PC-9 (cell line): ENCODE measurements at regions of chr17 and their contacts with region 1.

Region 1: GRCh38 chr17:67800495-67800928 is 24.8 kb upstream of the BPTF start:
- DNase-seq: peak; percentile 59 to 63
- H3K4me3 ChIP-seq: no peak overlapping the region
- H3K27ac ChIP-seq: no peak overlapping the region
- H3K4me1 ChIP-seq: no peaks in the 10 kb centered on the region
- H3K27me3 ChIP-seq: no peaks in the 10 kb centered on the region
- CTCF ChIP-seq: peak; percentile 74

Region 2: DNA sequence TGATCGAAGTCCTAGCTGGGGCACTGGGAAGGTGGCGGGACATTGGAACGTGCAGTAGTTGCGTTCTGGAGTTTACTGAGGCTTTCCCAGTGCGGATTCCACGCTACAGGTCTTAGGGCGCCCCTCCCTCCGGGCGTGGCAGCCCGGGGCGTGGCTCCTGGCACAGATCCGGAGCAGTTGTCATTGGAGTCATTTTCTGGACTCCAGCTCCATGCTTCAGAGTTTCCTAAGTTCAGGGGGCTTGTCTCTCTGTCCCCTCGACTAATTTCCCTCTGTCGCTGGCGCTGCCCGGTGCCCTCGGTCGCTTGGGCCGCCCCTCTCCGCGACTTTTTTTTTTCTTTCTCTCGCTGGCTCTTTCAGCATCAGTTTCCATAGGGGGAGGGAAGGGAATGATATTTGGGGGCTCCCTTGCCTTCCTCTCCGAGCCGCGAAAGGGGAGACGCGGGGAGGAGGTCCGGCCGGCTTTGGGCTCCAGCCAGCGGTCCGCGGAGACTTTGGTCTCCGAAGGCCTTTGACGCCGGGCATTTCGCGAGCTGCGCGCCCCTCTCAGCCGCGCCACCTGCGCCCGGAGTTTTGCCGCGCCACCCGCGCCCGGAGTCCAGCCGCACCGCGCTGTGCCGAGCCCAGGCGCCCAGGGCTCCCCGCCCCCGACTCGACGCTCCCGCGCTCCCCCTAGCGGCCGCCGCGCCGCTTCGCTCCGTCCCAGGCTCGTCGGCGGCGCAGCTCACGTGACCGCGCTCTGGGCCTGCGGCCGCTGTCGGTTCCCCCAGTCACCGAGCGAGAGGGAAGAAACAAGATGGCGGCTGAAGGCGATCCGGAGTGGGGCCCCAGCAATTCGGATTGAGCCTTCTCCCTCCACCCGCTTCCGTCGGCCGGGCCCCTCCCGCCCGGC is 24.5 kb after region 1 on chr17 and contains the start of gene BPTF:
- CTCF ChIA-PET with region 1: interaction called, 14 read pairs
- POLR2A ChIA-PET with region 1: no interaction called
- intact Hi-C with region 1: no loop called
- DNase-seq: peak; percentile 72 to 91
- H3K4me3 ChIP-seq: peak within 1 kb of the TSS; percentile 89
- H3K27ac ChIP-seq: peak within 1 kb of the TSS; percentile 40; the same call in 1 of the 2 replicates
- H3K4me1 ChIP-seq: peaks cover 9% of the 10 kb centered on the region; the same call in 1 of the 2 replicates
- H3K27me3 ChIP-seq: no peaks in the 10 kb centered on the region
- CTCF ChIP-seq: peak; percentile 78; the same call in 1 of the 2 replicates
- total RNA-seq, gene BPTF: 68.2 and 95.6 TPM in 2 replicates

Region 3: DNA sequence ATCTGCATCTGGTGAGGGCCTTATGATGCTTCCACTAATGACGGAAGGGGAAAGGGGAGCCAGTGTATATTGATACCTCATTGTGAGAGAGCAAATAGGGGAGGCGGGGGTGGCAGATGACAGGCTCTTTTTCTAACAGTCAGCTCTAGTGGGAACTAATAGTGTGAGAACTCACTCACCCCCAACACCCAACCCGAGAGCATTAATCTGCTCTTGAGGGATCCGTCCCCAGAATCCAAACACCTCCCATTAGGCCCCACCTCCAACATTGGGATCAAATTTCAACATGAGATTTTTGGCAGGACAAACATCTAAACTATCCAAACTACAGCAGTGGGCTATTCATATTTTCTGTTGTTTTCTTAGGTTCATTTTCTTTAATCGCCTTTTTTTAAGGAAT is 79.2 kb after region 1 on chr17:
- CTCF ChIA-PET with region 1: no interaction called
- POLR2A ChIA-PET with region 1: interaction called, 11 read pairs
- intact Hi-C with region 1: no loop called
- DNase-seq: no peak
- H3K4me3 ChIP-seq: no peak overlapping the region
- H3K27ac ChIP-seq: no peak overlapping the region
- H3K4me1 ChIP-seq: no peaks in the 10 kb centered on the region
- H3K27me3 ChIP-seq: no peaks in the 10 kb centered on the region
- CTCF ChIP-seq: no peak

Region 4: DNA sequence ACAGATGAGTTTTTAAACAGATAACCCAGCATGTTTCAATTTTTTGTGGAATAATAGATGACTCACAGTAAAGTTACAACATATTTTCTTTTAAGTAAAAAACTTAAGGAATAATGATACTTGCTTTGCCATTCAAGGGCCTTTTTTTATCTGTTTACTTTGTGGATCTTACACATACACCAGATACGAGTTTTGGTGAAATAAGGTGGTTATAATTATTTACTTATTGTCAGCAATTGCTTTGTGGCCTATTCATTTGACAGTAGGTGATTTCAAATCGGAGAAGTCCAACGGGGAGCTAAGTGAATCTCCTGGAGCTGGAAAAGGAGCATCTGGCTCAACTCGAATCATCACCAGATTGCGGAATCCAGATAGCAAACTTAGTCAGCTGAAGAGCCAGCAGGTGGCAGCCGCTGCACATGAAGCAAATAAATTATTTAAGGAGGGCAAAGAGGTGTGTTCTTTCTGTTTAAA is 91.1 kb after region 1 on chr17:
- CTCF ChIA-PET with region 1: no interaction called
- POLR2A ChIA-PET with region 1: no interaction called
- intact Hi-C with region 1: loop called (anchors 5 kb)
- DNase-seq: peak in 1 of 2 experiments; percentile 63
- H3K4me3 ChIP-seq: no peak overlapping the region
- H3K27ac ChIP-seq: peak overlapping the region; percentile 42
- H3K4me1 ChIP-seq: peaks cover 14% of the 10 kb centered on the region
- H3K27me3 ChIP-seq: no peaks in the 10 kb centered on the region
- CTCF ChIP-seq: peak; percentile 58; the same call in 1 of the 2 replicates